OCI-LY7 (cell line): ENCODE measurements at regions of chr1 and their contacts with region 1.

Region 1: GRCh38 chr1:41023279-41023990 is 1.9 kb upstream of the SLFNL1 start:
- DNase-seq: no peak
- H3K4me3 ChIP-seq: no peak overlapping the region
- H3K27ac ChIP-seq: no peak overlapping the region
- H3K4me1 ChIP-seq: peaks cover 8% of the 10 kb centered on the region
- CTCF ChIP-seq: no peak

Region 2: DNA sequence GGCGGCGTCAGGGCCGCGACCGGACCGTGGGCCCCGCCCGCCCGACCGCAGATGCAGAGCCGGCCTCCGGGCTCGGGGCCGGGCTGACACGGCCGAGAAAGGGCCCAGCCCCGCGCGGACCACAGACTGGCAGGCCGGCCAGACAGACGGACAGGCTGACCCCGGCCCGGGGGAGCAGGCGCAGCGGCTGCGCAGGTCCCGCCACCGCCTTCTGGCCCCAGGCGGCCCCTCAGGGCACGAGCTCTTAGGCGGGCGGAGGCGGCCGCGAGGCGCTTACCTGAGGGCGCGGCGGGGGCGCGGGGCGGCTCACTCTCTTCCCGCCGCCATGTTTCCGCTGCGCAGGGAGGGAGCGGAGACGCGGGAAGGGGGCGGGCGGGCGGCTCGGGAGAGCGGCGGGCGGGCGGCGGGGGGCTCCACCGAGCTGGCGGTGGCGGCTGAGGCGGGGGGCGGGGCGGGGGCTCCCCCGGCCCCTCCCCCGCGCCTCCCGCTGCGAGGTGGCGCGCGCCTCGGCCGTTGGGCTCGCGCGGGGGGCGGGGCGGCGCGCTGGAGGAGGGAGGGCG is 218.4 kb after region 1 on chr1 and contains the start of gene SCMH1:
- CTCF ChIA-PET with region 1: no interaction called
- POLR2A ChIA-PET with region 1: interaction called, 4 read pairs
- intact Hi-C with region 1: loop called (anchors 10 kb)
- DNase-seq: peak; percentile 79
- H3K4me3 ChIP-seq: peak within 1 kb of the TSS; percentile 81
- H3K27ac ChIP-seq: peak within 1 kb of the TSS; percentile 69
- H3K4me1 ChIP-seq: peaks cover 44% of the 10 kb centered on the region
- CTCF ChIP-seq: no peak
- total RNA-seq, gene SCMH1: 47.0 and 59.3 TPM in 2 replicates

Region 3: GRCh38 chr1:41474490-41475271 is 451.2 kb after region 1 on chr1:
- CTCF ChIA-PET with region 1: no interaction called
- POLR2A ChIA-PET with region 1: no interaction called
- intact Hi-C with region 1: no loop called
- DNase-seq: no peak
- H3K4me3 ChIP-seq: no peak overlapping the region
- H3K27ac ChIP-seq: no peak overlapping the region
- H3K4me1 ChIP-seq: no peaks in the 10 kb centered on the region
- CTCF ChIP-seq: no peak